Heart right ventricle (tissue), 16 donors: ENCODE measurements at regions of chr2 and their contacts with region 1.

Region 1: GRCh38 chr2:9984217-9984739 is 32.8 kb downstream of the GRHL1 start:
- DNase-seq: no peak
- ATAC-seq: peak; percentile 46 to 79 (median 59)
- H3K4me3 ChIP-seq: peak overlapping the region in 1 of 10 donors; percentile 11
- H3K27ac ChIP-seq: peak overlapping the region in 8 of 10 donors; percentile 10 to 58 (median 20)
- H3K4me1 ChIP-seq: peaks cover 5 to 43% (median 21%) of the 10 kb centered on the region in 9 donors
- H3K27me3 ChIP-seq: no peaks in the 10 kb centered on the region
- CTCF ChIP-seq: peak; percentile 78 to 93 (median 86)

Region 2: DNA sequence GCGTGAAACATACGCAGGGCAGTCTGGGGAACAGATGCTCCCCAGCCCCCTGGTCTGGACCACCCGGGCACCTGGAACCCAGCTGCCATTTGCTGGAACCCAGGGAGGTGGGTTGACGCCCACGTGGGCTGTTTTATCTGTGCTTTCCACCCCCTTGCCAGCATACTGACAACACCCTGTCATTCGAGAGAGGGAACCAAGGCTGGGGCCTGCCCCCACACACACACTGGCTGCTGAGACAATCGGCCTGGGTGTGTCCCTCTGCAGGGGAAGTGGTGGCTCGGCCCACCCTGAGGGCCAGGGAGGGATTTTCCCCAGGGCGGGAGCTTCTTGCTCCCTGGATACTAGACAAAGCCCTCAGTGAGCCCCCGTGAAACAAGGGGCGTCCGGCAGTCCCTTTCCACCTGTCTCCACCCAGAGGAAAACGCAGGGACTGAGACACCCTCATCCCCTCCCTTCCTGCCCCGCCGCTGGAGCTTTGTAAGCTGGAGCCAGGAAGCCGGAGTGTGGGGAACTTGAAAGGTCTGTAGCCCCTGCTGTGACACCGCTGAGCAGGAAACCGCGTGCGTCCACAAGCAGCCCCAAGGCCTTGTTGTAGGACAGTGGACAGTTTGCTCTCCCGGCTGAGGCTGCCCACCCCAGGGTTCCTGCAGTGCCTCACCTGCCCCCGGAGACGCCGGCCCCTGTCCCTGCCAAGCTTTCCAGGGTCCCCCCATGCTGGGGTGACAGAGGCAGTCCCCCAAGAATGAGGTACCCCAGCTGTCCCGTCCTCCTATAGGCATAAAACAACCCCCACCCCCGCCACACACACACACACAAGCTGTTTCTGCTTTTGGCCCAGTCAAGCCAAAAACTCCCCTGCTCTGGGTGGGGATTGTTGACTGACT is 45.0 kb after region 1 on chr2:
- intact Hi-C with region 1: loop called in 1 of 10 experiments (anchors 5 kb)
- DNase-seq: peak; percentile 73 to 84
- ATAC-seq: peak; percentile 81 to 92 (median 88)
- H3K4me3 ChIP-seq: peak overlapping the region in 6 of 10 donors; percentile 10 to 45 (median 24)
- H3K27ac ChIP-seq: peak overlapping the region; percentile 65 to 91 (median 83)
- H3K4me1 ChIP-seq: peaks cover 14 to 44% (median 34%) of the 10 kb centered on the region in 9 donors
- H3K27me3 ChIP-seq: no peaks in the 10 kb centered on the region
- CTCF ChIP-seq: peak in 3 of 9 donors; percentile 21 to 30 (median 29)

Region 3: GRCh38 chr2:10036095-10036884 is 52.0 kb after region 1 on chr2:
- intact Hi-C with region 1: loop called in 1 of 10 experiments (anchors 5 kb)
- DNase-seq: peak; percentile 68 to 69
- ATAC-seq: peak; percentile 70 to 87 (median 78)
- H3K4me3 ChIP-seq: no peak overlapping the region
- H3K27ac ChIP-seq: peak overlapping the region; percentile 0 to 96 (median 72)
- H3K4me1 ChIP-seq: peaks cover 13 to 68% (median 59%) of the 10 kb centered on the region in 9 donors
- H3K27me3 ChIP-seq: no peaks in the 10 kb centered on the region
- CTCF ChIP-seq: peak in 8 of 9 donors; percentile 32 to 74 (median 60)

Region 4: DNA sequence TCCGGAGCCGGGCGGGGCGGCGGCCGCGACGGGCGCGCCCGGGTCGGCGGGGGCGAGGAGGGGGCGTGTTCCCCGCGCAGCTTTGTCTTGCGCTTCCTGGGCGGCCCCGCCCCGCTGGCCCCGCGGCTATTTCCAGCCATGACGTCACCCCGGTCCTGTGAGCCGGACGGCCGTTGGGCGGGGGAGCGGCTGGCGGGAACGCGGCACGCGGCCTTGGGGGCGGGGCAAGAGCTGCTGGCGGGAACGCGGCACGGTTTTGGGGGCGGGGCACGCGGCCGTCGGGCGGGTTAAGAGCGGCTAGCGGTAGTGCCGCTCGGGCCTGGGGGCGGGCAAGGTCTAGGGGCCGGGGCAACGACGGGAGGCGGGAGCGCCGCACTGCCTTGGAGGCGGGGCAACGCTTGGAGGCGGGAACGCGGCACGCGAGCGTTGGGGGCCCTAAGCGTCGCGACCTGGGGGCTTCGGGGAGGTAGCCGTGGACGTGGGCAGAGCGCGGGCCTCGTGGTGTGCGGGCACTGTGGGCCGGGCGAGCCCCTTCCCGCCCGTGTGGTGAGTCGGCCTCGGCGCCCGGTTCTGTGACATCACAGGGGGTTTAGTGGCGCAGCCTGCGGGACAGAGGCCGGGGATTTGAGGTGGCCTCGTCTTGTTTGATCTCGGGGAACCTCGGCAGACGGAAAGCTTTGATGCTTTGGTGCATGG is 59.8 kb after region 1 on chr2:
- intact Hi-C with region 1: loop called (anchors 1 to 5 kb)
- DNase-seq: peak; percentile 99
- ATAC-seq: peak; percentile 73 to 84 (median 78)
- H3K4me3 ChIP-seq: peak overlapping the region; percentile 51 to 89 (median 64)
- H3K27ac ChIP-seq: peak overlapping the region; percentile 93 to 100 (median 98)
- H3K4me1 ChIP-seq: peaks cover 9 to 86% (median 73%) of the 10 kb centered on the region in 9 donors
- H3K27me3 ChIP-seq: no peaks in the 10 kb centered on the region
- CTCF ChIP-seq: no peak

Region 5: DNA sequence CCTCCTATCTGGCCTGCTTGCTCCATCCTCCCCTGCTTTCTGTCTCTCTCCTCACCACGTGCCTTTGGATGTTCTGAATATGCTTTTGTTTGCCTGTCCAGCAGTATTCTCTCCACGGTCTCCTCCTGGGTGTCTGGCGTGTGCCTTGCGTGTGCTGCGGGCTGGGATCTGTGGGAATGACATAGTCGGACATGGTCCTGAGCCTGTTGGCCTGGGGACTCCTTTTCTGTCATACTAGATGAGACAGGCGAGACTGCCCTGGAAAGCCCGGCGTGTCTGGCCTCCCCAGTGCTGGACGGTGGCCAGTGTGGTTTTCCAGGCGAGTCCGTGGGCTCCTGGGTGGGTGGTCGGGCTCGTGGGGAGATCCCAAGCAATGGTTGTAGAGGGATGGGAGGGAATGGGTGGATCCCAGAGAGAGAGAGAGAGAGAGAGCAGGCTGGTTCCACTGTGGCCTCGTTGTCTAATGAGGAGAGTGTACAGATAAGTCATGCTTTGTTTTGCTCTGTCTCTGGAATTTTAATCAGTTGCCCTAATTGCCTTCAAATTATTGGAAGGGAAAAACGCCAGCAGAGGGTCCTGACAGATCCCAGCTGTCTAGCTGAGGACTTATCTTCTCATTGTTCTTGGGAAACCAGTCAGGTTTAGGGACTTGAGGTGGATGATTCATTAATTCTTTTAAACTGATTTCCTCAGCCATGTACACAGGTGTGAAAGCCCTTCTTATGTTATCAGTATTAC is 376.7 kb after region 1 on chr2:
- intact Hi-C with region 1: no loop called
- DNase-seq: no peak
- ATAC-seq: no peak
- H3K4me3 ChIP-seq: no peak overlapping the region
- H3K27ac ChIP-seq: no peak overlapping the region
- H3K4me1 ChIP-seq: peaks cover 0 to 58% (median 15%) of the 10 kb centered on the region in 9 donors
- H3K27me3 ChIP-seq: no peaks in the 10 kb centered on the region
- CTCF ChIP-seq: no peak

Region 6: GRCh38 chr2:10424051-10424450 is 439.8 kb after region 1 on chr2:
- intact Hi-C with region 1: loop called in 1 of 10 experiments (anchors 10 kb)
- DNase-seq: no peak
- ATAC-seq: no peak
- H3K4me3 ChIP-seq: no peak overlapping the region
- H3K27ac ChIP-seq: no peak overlapping the region
- H3K4me1 ChIP-seq: no peaks in the 10 kb centered on the region
- H3K27me3 ChIP-seq: no peaks in the 10 kb centered on the region
- CTCF ChIP-seq: no peak

Region 7: GRCh38 chr2:10448208-10448645 is 463.9 kb after region 1 on chr2 and contains the start of gene ODC1:
- intact Hi-C with region 1: loop called in 1 of 10 experiments (anchors 10 kb)
- DNase-seq: peak; percentile 92 to 94
- ATAC-seq: peak; percentile 83 to 93 (median 91)
- H3K4me3 ChIP-seq: peak within 1 kb of the TSS; percentile 56 to 83 (median 68)
- H3K27ac ChIP-seq: peak within 1 kb of the TSS; percentile 81 to 96 (median 90)
- H3K4me1 ChIP-seq: peaks cover 8 to 54% (median 29%) of the 10 kb centered on the region in 9 donors
- H3K27me3 ChIP-seq: no peaks in the 10 kb centered on the region
- CTCF ChIP-seq: no peak
- total RNA-seq, gene ODC1: 25.4 to 92.8 (median 56.0) TPM

Region 8: GRCh38 chr2:10654069-10654468 is 669.8 kb after region 1 on chr2:
- intact Hi-C with region 1: no loop called
- DNase-seq: no peak
- ATAC-seq: no peak
- H3K4me3 ChIP-seq: no peak overlapping the region
- H3K27ac ChIP-seq: no peak overlapping the region
- H3K4me1 ChIP-seq: peaks cover 0 to 16% (median 0%) of the 10 kb centered on the region in 9 donors
- H3K27me3 ChIP-seq: no peaks in the 10 kb centered on the region
- CTCF ChIP-seq: no peak